Ascending aorta (tissue), 2 donors: ENCODE measurements at regions of chr7 and their contacts with region 1.

Region 1: GRCh38 chr7:107743567-107744344 is at the start of gene CBLL1:
- DNase-seq: peak; percentile 85 to 99
- H3K4me3 ChIP-seq: peak within 1 kb of the TSS; percentile 80 to 92
- H3K27ac ChIP-seq: peak within 1 kb of the TSS; percentile 95
- H3K4me1 ChIP-seq: peaks cover 10 to 20% of the 10 kb centered on the region in 2 donors
- H3K27me3 ChIP-seq: no peaks in the 10 kb centered on the region
- CTCF ChIP-seq: peak; percentile 51 to 76 (median 71)
- total RNA-seq, gene CBLL1: 44.1 TPM

Region 2: GRCh38 chr7:107168233-107169119 is 575.3 kb before region 1 on chr7 and contains the start of gene HBP1:
- intact Hi-C with region 1: loop called (anchors 1 kb)
- DNase-seq: peak; percentile 100
- H3K4me3 ChIP-seq: peak within 1 kb of the TSS; percentile 81 to 94
- H3K27ac ChIP-seq: peak within 1 kb of the TSS; percentile 94 to 100
- H3K4me1 ChIP-seq: peaks cover 2 to 23% of the 10 kb centered on the region in 2 donors
- H3K27me3 ChIP-seq: no peaks in the 10 kb centered on the region
- CTCF ChIP-seq: no peak
- total RNA-seq, gene HBP1: 62.2 TPM

Region 3: GRCh38 chr7:107563775-107564552 is 179.8 kb before region 1 on chr7 and contains the starts of genes COG5 and DUS4L:
- intact Hi-C with region 1: loop called (anchors 5 kb)
- DNase-seq: peak; percentile 31 to 89
- H3K4me3 ChIP-seq: peak within 1 kb of the TSS; percentile 94 to 96
- H3K27ac ChIP-seq: peak within 1 kb of the TSS; percentile 96 to 97
- H3K4me1 ChIP-seq: peaks cover 3 to 21% of the 10 kb centered on the region in 2 donors
- H3K27me3 ChIP-seq: no peaks in the 10 kb centered on the region
- CTCF ChIP-seq: no peak
- total RNA-seq, gene COG5: 16.8 TPM
- total RNA-seq, gene DUS4L: 0.75 TPM

Region 4: GRCh38 chr7:107594961-107595737 is 148.6 kb before region 1 on chr7:
- intact Hi-C with region 1: loop called (anchors 5 kb)
- DNase-seq: peak in 1 of 2 donors; percentile 75
- H3K4me3 ChIP-seq: no peak overlapping the region
- H3K27ac ChIP-seq: peak overlapping the region; percentile 79 to 93
- H3K4me1 ChIP-seq: peaks cover 4 to 58% of the 10 kb centered on the region in 2 donors
- H3K27me3 ChIP-seq: no peaks in the 10 kb centered on the region
- CTCF ChIP-seq: no peak

Region 5: GRCh38 chr7:107658467-107658866 is 85.3 kb before region 1 on chr7:
- intact Hi-C with region 1: no loop called
- DNase-seq: no peak
- H3K4me3 ChIP-seq: no peak overlapping the region
- H3K27ac ChIP-seq: no peak overlapping the region
- H3K4me1 ChIP-seq: peaks cover 9 to 10% of the 10 kb centered on the region in 2 donors
- H3K27me3 ChIP-seq: no peaks in the 10 kb centered on the region
- CTCF ChIP-seq: no peak

Region 6: DNA sequence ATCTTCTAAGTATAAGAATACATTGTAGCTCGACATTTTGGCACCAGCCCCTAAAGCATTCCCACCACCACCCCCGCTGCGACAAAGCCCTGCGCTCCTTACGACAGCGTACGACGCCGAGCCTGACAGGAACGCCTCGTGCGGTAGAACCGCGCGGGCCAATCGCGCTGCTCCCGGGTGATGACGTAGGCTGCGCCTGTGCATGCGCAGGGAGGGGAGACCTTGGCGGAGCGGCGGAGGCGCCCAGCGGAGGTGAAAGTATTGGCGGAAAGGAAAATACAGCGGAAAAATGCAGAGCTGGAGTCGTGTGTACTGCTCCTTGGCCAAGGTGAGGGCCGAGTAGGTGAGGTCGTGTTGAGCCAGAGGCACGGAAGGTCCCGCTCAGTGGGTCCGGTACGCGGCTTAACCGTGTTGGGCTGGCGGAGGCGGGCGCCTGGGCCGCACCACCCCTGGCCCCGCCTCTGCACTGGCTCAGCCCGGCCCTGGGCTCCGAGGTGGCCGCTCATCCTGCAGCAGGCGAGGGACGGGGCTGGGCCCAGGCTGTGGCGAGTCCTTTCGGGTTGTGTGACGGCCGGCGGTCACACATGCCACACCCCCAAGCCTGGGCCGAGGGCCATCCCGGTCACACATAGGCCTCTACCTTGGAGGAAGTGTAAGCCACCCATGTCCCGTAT is 147.3 kb after region 1 on chr7 and contains the start of gene DLD:
- intact Hi-C with region 1: loop called (anchors 5 kb)
- DNase-seq: peak; percentile 78 to 97
- H3K4me3 ChIP-seq: peak within 1 kb of the TSS; percentile 83 to 85
- H3K27ac ChIP-seq: peak within 1 kb of the TSS; percentile 95
- H3K4me1 ChIP-seq: peaks cover 3 to 17% of the 10 kb centered on the region in 2 donors
- H3K27me3 ChIP-seq: no peaks in the 10 kb centered on the region
- CTCF ChIP-seq: no peak
- total RNA-seq, gene DLD: 19.2 TPM

Region 7: GRCh38 chr7:108146070-108146837 is 402.5 kb after region 1 on chr7:
- intact Hi-C with region 1: loop called (anchors 1 kb)
- DNase-seq: peak in 1 of 2 donors; percentile 75
- H3K4me3 ChIP-seq: no peak overlapping the region
- H3K27ac ChIP-seq: no peak overlapping the region
- H3K4me1 ChIP-seq: no peaks in the 10 kb centered on the region
- H3K27me3 ChIP-seq: no peaks in the 10 kb centered on the region
- CTCF ChIP-seq: peak; percentile 64 to 93 (median 80)